Posterior vena cava (tissue), 2 donors: ENCODE measurements at regions of chr7 and their contacts with region 1.

Region 1: GRCh38 chr7:876167-876967 is at the start of gene GET4:
- DNase-seq: peak; percentile 99
- total RNA-seq, gene GET4: 13.2 to 16.3 TPM

Region 2: GRCh38 chr7:112881-113280 is 763.5 kb before region 1 on chr7:
- intact Hi-C with region 1: loop called in 1 of 2 experiments (anchors 5 kb)
- DNase-seq: no peak

Region 3: GRCh38 chr7:823649-824048 is 52.7 kb before region 1 on chr7:
- intact Hi-C with region 1: loop called in 1 of 2 experiments (anchors 2 kb)
- DNase-seq: peak; percentile 46